Activated CD4-positive, alpha-beta T cell treated with anti-CD3 and anti-CD28 coated beads, Interleukin-2, amount 10 ng/mL, durations not matched to agents 24 days and 14 days (primary cell): ENCODE measurements at regions of chr2 and their contacts with region 1.

Region 1: DNA sequence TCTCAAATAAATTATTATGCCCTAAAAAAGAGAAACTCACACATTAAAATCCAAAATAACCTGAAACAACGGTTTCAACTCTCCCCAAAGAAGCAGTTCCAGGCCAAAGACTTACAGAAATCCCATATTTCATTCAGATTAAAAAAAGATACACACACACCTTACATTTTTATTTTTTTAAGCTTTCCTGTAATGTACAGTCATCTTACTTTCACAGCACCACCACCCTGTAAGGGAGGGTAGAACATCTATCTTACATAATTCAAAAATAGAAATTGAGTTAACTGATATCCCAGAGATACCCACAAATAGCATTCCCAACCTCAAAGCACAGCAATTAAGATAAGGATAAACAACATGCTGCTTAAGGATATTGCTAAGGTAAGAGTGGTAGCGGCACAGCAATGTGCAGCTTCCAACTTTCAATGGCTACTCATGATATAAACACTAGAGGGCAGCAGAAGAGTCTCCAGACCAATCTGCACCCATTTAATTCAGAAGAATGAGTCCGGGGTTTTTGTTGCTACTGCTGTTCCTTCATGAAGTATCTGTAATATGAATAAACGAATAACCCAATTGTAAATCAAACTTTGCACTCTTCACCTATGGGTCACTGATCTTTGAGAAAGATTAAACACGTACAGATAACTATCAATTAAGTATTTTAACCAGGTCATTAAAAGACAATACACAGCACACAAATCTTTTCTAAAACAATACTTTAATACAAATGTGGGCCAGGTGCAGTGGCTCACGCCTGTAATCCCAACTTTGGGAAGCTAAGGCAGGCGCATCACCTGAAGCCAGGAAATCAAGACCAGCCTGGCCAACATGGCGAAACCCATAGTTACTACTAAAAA is 11.3 kb downstream of the GFPT1 start:
- DNase-seq: peak; percentile 76
- H3K4me3 Mint-ChIP-seq: no peak overlapping the region
- H3K27ac Mint-ChIP-seq: no peak overlapping the region
- H3K4me1 Mint-ChIP-seq: peaks cover 18% of the 10 kb centered on the region
- H3K27me3 Mint-ChIP-seq: no peaks in the 10 kb centered on the region

Region 2: DNA sequence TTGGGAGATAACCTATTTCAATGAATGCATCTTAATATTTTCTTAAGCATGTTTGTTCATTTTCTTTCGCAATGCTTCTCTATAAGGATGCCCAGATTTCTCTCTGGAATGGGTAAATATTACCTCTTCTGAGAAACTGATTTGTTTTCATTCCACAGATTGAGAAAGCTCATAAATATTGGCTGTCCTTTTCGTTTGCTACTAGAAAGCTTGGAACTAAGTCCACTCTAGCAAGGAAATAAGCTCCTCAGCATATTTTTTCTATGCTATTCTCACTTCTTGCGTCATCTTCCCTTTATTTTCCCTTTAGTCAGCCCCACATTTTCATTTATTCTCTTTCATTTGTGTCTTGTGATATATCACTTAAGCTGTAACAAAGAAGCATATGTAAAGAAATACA is 286.5 kb before region 1 on chr2:
- intact Hi-C with region 1: no loop called
- DNase-seq: no peak
- H3K4me3 Mint-ChIP-seq: no peak overlapping the region
- H3K27ac Mint-ChIP-seq: no peak overlapping the region
- H3K4me1 Mint-ChIP-seq: no peaks in the 10 kb centered on the region
- H3K27me3 Mint-ChIP-seq: peaks cover 39% of the 10 kb centered on the region

Region 3: GRCh38 chr2:69386789-69387734 is 11.3 kb after region 1 on chr2 and contains the start of gene GFPT1:
- intact Hi-C with region 1: loop called (anchors 1 kb)
- DNase-seq: peak; percentile 99
- H3K4me3 Mint-ChIP-seq: peak within 1 kb of the TSS; percentile 98
- H3K27ac Mint-ChIP-seq: peak within 1 kb of the TSS; percentile 95
- H3K4me1 Mint-ChIP-seq: peaks cover 40% of the 10 kb centered on the region
- H3K27me3 Mint-ChIP-seq: no peaks in the 10 kb centered on the region
- total RNA-seq, gene GFPT1: 48.8 and 50.6 TPM in 2 replicates

Region 4: DNA sequence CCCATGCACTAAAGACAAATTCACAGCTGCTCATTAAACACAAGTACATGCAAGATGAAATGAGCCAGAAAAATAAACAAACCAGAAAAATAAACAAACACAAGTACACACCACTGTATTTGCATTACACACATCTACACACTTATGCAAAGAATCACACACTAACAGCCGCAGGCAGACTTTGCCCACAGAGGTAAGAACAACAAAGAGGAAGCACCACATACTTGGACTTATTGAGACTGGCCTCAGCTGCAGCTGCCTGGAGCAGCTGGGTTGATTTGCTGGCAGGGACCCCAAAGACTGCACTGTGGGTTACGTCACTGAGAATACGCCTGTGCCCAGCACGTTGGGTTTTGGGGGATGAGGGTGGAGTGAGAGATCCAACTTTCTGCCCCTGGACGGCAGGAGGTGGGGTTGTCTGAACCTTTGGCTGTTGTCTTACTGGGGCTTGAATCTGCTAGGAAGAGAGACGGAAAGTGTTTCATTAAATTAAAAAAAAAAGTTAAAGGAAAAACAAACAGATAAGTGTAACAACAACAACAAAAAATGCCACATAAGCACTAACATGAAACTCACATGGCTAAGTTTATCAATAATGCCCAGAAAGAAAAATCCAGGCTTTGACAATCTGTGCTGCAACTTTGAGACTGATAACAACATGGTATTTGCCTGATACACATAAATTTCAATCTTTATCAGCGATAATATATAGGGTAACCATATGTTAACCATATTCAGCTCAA is 133.5 kb after region 1 on chr2:
- intact Hi-C with region 1: loop called (anchors 5 kb)
- DNase-seq: no peak
- H3K4me3 Mint-ChIP-seq: peak overlapping the region; percentile 20
- H3K27ac Mint-ChIP-seq: peak overlapping the region; percentile 88
- H3K4me1 Mint-ChIP-seq: peaks cover 33% of the 10 kb centered on the region
- H3K27me3 Mint-ChIP-seq: no peaks in the 10 kb centered on the region

Region 5: GRCh38 chr2:69715964-69716363 is 340.2 kb after region 1 on chr2:
- intact Hi-C with region 1: loop called (anchors 1 kb)
- DNase-seq: no peak
- H3K4me3 Mint-ChIP-seq: no peak overlapping the region
- H3K27ac Mint-ChIP-seq: peak overlapping the region; percentile 1
- H3K4me1 Mint-ChIP-seq: peaks cover 17% of the 10 kb centered on the region
- H3K27me3 Mint-ChIP-seq: peaks cover 3% of the 10 kb centered on the region